ENCODE measurements at regions of chr1 and their contacts with region 1.

Region 1: GRCh38 chr1:173986951-173987350 is 35.2 kb downstream of the RC3H1 start:
- DNase-seq: no peak
- ATAC-seq: no peak
- H3K4me3 ChIP-seq: no peak overlapping the region
- H3K27ac ChIP-seq: peak overlapping the region in 1 of 4 donors; percentile 20
- H3K4me1 ChIP-seq: no peaks in the 10 kb centered on the region
- H3K27me3 ChIP-seq: no peaks in the 10 kb centered on the region
- CTCF ChIP-seq: no peak
- POLR2A ChIP-seq: no peak

Region 2: GRCh38 chr1:173876732-173877131 is 110.2 kb before region 1 on chr1:
- in situ Hi-C with region 1: no loop called
- intact Hi-C with region 1: no loop called
- DNase-seq: no peak
- ATAC-seq: no peak
- H3K4me3 ChIP-seq: no peak overlapping the region
- H3K27ac ChIP-seq: no peak overlapping the region
- H3K4me1 ChIP-seq: no peaks in the 10 kb centered on the region
- H3K27me3 ChIP-seq: no peaks in the 10 kb centered on the region
- CTCF ChIP-seq: no peak
- POLR2A ChIP-seq: no peak

Region 3: DNA sequence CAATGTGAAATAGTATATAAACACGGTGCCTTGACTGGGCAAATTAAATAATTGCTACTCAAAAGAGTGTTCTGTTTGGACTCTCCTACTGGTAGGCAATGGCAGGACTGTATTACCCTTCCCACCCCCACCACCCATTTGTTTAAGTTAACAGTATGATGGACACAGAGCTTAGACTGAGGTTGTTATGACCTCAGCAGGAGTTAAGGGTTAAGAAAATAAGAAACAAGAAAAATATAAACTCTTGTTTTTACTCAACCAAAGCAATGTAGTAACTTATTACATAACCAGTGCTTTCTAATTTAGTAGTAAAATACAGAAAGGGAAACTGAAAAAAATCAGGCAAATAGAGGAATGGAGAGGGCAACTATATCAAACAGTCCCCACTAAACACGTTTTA is 49.9 kb before region 1 on chr1:
- in situ Hi-C with region 1: no loop called
- intact Hi-C with region 1: loop called (anchors 5 kb)
- DNase-seq: no peak
- ATAC-seq: no peak
- H3K4me3 ChIP-seq: no peak overlapping the region
- H3K27ac ChIP-seq: no peak overlapping the region
- H3K4me1 ChIP-seq: no peaks in the 10 kb centered on the region
- H3K27me3 ChIP-seq: no peaks in the 10 kb centered on the region
- CTCF ChIP-seq: no peak
- POLR2A ChIP-seq: no peak

Region 4: GRCh38 chr1:174032671-174033222 is 45.8 kb after region 1 on chr1:
- in situ Hi-C with region 1: no loop called
- intact Hi-C with region 1: no loop called
- DNase-seq: no peak
- ATAC-seq: no peak
- H3K4me3 ChIP-seq: no peak overlapping the region
- H3K27ac ChIP-seq: no peak overlapping the region
- H3K4me1 ChIP-seq: no peaks in the 10 kb centered on the region
- H3K27me3 ChIP-seq: no peaks in the 10 kb centered on the region
- CTCF ChIP-seq: no peak
- POLR2A ChIP-seq: no peak